Astrocyte of the cerebellum (primary cell): ENCODE measurements at regions of chr1 and their contacts with region 1.

Region 1: DNA sequence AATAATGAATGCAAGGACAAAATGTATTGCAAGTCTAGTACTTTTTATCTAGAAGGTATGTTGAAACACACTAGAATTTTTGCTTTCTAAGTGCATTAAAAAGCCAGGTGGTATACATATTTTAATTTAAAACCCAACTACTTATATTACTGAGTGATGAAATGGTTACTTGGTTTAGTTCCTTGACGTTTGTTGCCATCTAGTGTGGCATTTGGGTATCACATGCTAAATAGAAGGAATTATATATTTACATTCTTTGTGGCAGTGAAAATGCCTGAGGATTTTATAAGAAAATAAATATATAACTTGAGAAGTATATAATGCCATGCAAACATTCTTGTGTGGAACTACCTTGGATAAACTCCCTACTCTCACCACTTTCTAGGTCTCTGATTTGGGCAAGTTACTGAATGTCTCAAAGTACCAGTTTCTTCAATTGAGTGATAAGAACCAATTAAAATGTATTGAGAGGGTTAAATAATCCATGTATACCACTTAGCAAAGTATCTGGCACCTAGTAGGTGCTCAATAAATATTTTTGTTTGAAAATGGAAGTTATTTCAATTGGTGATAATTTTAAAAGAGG is 69.6 kb downstream of the SDCCAG8 start:
- DNase-seq: peak; percentile 58
- H3K4me3 ChIP-seq: no peak overlapping the region
- CTCF ChIP-seq: peak; percentile 49

Region 2: DNA sequence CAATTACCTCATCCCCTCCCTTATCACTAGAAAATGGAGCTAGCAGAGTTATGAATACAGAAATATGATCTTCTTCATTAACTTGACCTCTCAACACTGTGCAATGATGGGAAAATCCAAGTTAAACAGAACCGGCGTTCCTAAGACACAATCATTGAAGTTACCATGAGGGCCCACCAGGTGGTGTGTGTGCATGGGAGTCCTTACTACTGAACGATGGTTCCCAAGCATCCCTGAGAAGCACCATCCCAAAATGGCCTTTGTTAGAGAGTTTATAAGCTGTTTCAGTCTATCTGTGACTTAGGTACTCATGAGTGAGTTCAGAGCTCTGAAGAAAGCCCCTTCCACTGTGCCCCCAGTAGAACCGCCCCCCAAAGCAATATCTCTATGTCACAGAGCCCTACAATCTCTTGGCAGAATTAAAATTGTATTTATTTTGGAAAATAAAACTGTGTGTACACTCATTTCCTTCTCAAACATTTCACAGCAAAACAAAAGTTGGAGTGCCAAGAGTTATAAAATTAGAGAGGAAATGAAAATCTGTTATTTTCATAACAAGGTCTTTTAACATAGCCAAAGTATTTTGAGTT is 857.7 kb before region 1 on chr1:
- in situ Hi-C with region 1: loop called (anchors 25 kb)
- DNase-seq: peak; percentile 37
- H3K4me3 ChIP-seq: no peak overlapping the region
- CTCF ChIP-seq: peak; percentile 83